Heart left ventricle (tissue), 16 donors: ENCODE measurements at regions of chr9 and their contacts with region 1.

Region 1: DNA sequence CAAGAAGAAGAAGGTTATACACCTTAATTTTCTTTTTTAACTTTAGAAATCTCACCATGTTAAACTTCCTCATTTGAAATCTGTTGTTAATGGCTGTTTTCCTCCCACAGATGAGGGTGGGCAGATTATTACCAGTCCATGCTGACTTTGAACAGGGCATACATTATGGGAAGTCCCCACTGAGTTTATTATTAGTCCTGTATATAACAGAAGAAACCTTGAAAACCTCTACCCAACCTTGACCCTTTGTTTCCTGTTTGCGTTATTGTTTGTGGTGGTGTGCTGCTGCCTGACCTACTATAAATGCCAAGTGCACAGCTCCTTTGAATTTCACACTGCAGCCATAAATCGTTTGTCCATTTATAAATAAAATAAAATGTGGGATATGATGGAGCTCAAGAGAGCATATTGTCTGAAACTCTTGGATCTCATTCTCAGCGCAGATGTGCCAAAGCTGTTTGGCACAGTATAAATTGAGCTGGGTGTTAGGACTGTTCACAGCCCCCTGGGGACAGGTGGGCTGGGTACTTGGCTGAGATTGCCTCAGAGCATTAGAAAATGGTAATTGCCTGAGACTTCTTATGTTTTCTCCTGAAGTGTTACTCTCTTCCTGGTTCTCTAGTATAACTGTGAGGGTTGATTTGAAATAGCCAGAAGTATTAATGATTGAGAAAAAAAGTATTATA is 139.6 kb downstream of the SPATA31D1 start:
- DNase-seq: no peak
- ATAC-seq: no peak
- H3K4me3 ChIP-seq: no peak overlapping the region
- H3K27ac ChIP-seq: no peak overlapping the region
- H3K4me1 ChIP-seq: no peaks in the 10 kb centered on the region
- H3K27me3 ChIP-seq: no peaks in the 10 kb centered on the region
- CTCF ChIP-seq: no peak
- POLR2A ChIP-seq: no peak

Region 2: GRCh38 chr9:81754245-81754644 is 373.9 kb before region 1 on chr9:
- intact Hi-C with region 1: loop called in 1 of 10 experiments (anchors 5 kb)
- DNase-seq: no peak
- ATAC-seq: no peak
- H3K4me3 ChIP-seq: no peak overlapping the region
- H3K27ac ChIP-seq: no peak overlapping the region
- H3K4me1 ChIP-seq: no peaks in the 10 kb centered on the region
- H3K27me3 ChIP-seq: no peaks in the 10 kb centered on the region
- CTCF ChIP-seq: no peak
- POLR2A ChIP-seq: no peak

Region 3: DNA sequence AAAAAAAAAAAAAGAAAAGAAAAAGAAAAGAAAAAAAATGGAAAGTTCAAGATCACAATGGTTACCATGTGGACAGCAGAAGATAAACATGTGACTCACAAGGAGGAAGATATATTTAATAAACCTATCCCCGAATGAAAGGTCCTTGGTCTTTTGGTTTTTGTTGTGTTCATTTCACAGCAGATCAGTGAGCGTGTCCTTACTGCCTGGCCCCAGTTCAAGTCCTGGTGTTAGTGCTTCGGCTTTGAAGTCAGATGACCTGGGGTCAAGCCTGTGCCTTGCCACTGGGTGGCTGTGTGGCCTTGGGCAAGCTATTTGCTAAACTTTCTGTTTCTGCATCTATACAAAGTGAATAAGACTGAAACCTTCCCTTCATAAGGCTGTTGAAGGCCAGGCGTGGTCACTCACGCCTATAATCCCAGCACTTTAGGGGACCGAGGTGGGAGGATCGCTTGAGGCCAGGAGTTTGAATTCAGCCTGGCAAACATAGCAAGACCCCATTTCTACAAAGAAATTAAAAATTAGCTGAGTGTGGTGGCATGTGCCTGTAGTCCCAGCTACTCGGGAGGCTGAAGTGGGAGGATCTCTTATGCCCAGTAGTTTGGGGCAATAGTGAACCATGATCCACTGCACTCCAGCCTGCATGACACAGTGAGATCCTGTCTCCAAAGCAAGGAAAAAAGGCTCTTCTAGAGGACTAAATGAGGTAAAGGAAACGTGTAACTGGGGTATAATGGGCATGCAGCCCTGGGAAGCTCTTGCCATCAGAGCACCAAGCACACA is 294.4 kb before region 1 on chr9:
- intact Hi-C with region 1: no loop called
- DNase-seq: no peak
- ATAC-seq: no peak
- H3K4me3 ChIP-seq: no peak overlapping the region
- H3K27ac ChIP-seq: peak overlapping the region in 1 of 12 donors; percentile 64
- H3K4me1 ChIP-seq: no peaks in the 10 kb centered on the region
- H3K27me3 ChIP-seq: peaks cover 0 to 54% (median 3%) of the 10 kb centered on the region in 9 donors
- CTCF ChIP-seq: no peak
- POLR2A ChIP-seq: no peak

Region 4: GRCh38 chr9:82080265-82080664 is 47.9 kb before region 1 on chr9:
- intact Hi-C with region 1: loop called in 1 of 10 experiments (anchors 5 kb)
- DNase-seq: no peak
- ATAC-seq: no peak
- H3K4me3 ChIP-seq: no peak overlapping the region
- H3K27ac ChIP-seq: no peak overlapping the region
- H3K4me1 ChIP-seq: no peaks in the 10 kb centered on the region
- H3K27me3 ChIP-seq: no peaks in the 10 kb centered on the region
- CTCF ChIP-seq: no peak
- POLR2A ChIP-seq: no peak

Region 5: GRCh38 chr9:82320566-82320965 is 192.4 kb after region 1 on chr9:
- intact Hi-C with region 1: no loop called
- DNase-seq: no peak
- ATAC-seq: no peak
- H3K4me3 ChIP-seq: no peak overlapping the region
- H3K27ac ChIP-seq: no peak overlapping the region
- H3K4me1 ChIP-seq: no peaks in the 10 kb centered on the region
- H3K27me3 ChIP-seq: no peaks in the 10 kb centered on the region
- CTCF ChIP-seq: no peak
- POLR2A ChIP-seq: no peak